ENCODE measurements at regions of chr4 and their contacts with region 1.

Region 1: GRCh38 chr4:176340871-176341685 is 21.3 kb downstream of the SPCS3 start:
- DNase-seq: no peak
- ATAC-seq: peak; percentile 64
- H3K4me3 Mint-ChIP-seq: no peak overlapping the region
- H3K27ac Mint-ChIP-seq: no peak overlapping the region
- H3K4me1 Mint-ChIP-seq: peaks cover 6% of the 10 kb centered on the region
- H3K27me3 Mint-ChIP-seq: no peaks in the 10 kb centered on the region

Region 2: DNA sequence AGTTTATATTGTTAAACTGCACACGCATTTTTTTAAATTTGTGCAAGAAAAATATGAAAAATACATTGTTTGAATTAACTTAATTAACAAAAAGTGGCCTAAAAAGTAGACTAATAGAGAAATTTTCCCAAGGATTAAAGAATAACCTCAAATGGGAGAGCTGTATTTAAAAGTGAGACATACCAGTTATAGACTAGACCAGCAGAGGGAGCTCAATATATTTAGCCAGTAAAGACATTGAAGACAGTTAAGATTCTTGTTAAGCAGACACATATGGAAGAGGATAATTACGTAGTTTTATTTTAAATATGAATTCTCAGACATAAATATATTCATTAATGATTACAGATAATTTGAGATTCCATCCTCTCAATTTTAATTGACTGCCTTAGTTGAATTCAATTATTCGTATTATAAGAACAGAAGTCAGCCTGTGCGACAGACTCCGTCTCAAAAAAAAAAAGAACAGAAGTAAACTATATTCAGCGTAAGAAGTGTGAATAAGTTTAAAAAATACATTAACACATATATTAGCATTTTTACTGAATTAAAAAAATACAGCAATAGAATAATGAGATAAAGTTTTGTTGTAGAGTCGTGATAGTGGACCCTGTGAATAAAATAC is 1576.9 kb before region 1 on chr4:
- CTCF ChIA-PET with region 1: no interaction called
- POLR2A ChIA-PET with region 1: no interaction called
- intact Hi-C with region 1: loop called in 1 of 2 experiments (anchors 10 kb)
- DNase-seq: no peak
- ATAC-seq: no peak
- H3K4me3 Mint-ChIP-seq: no peak overlapping the region
- H3K27ac Mint-ChIP-seq: no peak overlapping the region
- H3K4me1 Mint-ChIP-seq: no peaks in the 10 kb centered on the region
- H3K27me3 Mint-ChIP-seq: no peaks in the 10 kb centered on the region

Region 3: GRCh38 chr4:175947117-175947722 is 393.9 kb before region 1 on chr4:
- CTCF ChIA-PET with region 1: interaction called, 7 read pairs
- POLR2A ChIA-PET with region 1: no interaction called
- intact Hi-C with region 1: loop called (anchors 1 kb)
- DNase-seq: no peak
- ATAC-seq: no peak
- H3K4me3 Mint-ChIP-seq: no peak overlapping the region
- H3K27ac Mint-ChIP-seq: no peak overlapping the region
- H3K4me1 Mint-ChIP-seq: peaks cover 6% of the 10 kb centered on the region
- H3K27me3 Mint-ChIP-seq: peaks cover 2% of the 10 kb centered on the region

Region 4: GRCh38 chr4:176034499-176034898 is 306.6 kb before region 1 on chr4:
- CTCF ChIA-PET with region 1: interaction called, 18 read pairs
- POLR2A ChIA-PET with region 1: no interaction called
- intact Hi-C with region 1: loop called (anchors 1 to 2 kb)
- DNase-seq: peak; percentile 16
- ATAC-seq: no peak
- H3K4me3 Mint-ChIP-seq: no peak overlapping the region
- H3K27ac Mint-ChIP-seq: no peak overlapping the region
- H3K4me1 Mint-ChIP-seq: no peaks in the 10 kb centered on the region
- H3K27me3 Mint-ChIP-seq: peaks cover 5% of the 10 kb centered on the region

Region 5: DNA sequence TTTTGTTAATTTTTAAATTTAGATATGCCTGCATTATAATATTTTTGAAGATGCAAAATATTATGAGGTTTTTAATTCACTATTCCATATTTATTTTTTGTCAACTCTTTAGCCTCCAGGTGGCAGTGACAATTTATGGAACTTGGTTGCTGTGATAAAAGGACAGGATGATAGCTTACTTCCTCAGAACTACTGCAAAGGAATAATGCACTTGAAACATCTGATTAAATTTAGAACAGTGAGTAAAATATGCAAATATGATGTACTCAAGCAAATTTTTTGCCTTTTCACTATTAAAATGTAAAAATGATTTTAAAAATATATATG is 190.8 kb before region 1 on chr4:
- CTCF ChIA-PET with region 1: interaction called, 12 read pairs
- POLR2A ChIA-PET with region 1: no interaction called
- intact Hi-C with region 1: loop called (anchors 1 kb)
- DNase-seq: no peak
- ATAC-seq: no peak
- H3K4me3 Mint-ChIP-seq: no peak overlapping the region
- H3K27ac Mint-ChIP-seq: no peak overlapping the region
- H3K4me1 Mint-ChIP-seq: no peaks in the 10 kb centered on the region
- H3K27me3 Mint-ChIP-seq: no peaks in the 10 kb centered on the region